ENCODE measurements at regions of chr2 and their contacts with region 1.

Region 1: GRCh38 chr2:213934560-213934959 is 476.3 kb upstream of the VWC2L start:
- DNase-seq: peak; percentile 23
- H3K4me3 Mint-ChIP-seq: no peak overlapping the region
- H3K27ac Mint-ChIP-seq: no peak overlapping the region
- H3K4me1 Mint-ChIP-seq: no peaks in the 10 kb centered on the region
- H3K27me3 Mint-ChIP-seq: no peaks in the 10 kb centered on the region
- CTCF ChIP-seq: peak; percentile 34

Region 2: DNA sequence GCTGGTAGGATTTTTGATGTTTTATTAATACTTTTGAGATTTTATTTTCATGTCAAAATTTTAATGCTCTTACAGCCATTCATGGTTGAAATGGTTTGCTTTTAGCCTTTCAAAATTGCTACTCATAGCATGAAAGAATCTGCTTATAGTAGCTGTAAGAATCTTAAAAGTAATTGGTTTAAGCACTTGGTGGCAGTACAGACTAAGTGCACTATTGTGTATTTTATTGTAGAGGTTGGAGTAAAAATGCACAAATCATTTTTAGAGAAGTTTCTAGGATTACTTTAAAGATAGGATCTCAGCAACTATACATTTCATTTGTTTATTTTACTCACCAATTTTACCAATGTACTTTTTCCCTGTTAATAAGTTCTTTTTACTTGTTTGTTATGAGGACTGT is 444.5 kb before region 1 on chr2:
- CTCF ChIA-PET with region 1: interaction called, 3 read pairs
- intact Hi-C with region 1: loop called (anchors 10 kb)
- DNase-seq: no peak
- H3K4me3 Mint-ChIP-seq: no peak overlapping the region
- H3K27ac Mint-ChIP-seq: no peak overlapping the region
- H3K4me1 Mint-ChIP-seq: no peaks in the 10 kb centered on the region
- H3K27me3 Mint-ChIP-seq: no peaks in the 10 kb centered on the region
- CTCF ChIP-seq: no peak

Region 3: DNA sequence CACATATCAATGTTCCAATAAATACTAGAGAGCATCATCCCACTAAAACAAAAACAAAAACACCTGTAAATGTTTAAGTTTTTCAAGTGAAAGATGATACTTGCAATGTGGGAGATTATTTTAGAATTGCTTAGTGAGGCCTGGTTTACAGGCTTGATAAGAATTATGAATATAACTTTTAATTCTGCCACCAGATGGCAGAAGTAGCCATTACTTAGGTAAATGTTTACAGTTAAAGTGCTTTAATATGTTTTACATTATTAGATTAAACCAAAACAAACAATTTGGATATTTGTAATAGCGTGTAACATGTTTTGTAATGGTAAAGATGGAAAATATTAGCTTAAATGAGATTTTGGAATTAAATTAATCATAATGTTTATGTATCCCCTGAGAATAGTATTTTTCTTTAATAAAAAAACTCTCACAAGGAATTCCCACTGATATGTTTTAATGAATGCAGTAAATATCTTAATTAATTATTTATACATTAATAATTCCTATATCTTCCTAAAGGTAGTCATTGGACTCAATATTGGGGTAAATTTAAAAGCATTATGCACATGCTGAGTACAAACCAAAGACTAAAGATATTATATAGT is 128.3 kb before region 1 on chr2:
- CTCF ChIA-PET with region 1: no interaction called
- intact Hi-C with region 1: loop called (anchors 1 kb)
- DNase-seq: no peak
- H3K4me3 Mint-ChIP-seq: no peak overlapping the region
- H3K27ac Mint-ChIP-seq: no peak overlapping the region
- H3K4me1 Mint-ChIP-seq: no peaks in the 10 kb centered on the region
- H3K27me3 Mint-ChIP-seq: no peaks in the 10 kb centered on the region
- CTCF ChIP-seq: peak; percentile 41

Measured in Calu3 (cell line).